ENCODE measurements at regions of chr12 and their contacts with region 1.

Region 1: GRCh38 chr12:96335270-96335669 is 65.0 kb downstream of the CDK17 start:
- DNase-seq: peak in 3 of 14 experiments; percentile 25 to 29 (median 27)
- ATAC-seq: peak; percentile 59
- H3K4me3 ChIP-seq: no peak overlapping the region
- H3K4me3 Mint-ChIP-seq: peak overlapping the region; percentile 68
- H3K27ac ChIP-seq: peak overlapping the region in 1 of 2 donors; percentile 29
- H3K27ac Mint-ChIP-seq: peak overlapping the region; percentile 17
- H3K4me1 ChIP-seq: peaks cover 3% of the 10 kb centered on the region
- H3K4me1 Mint-ChIP-seq: peaks cover 72% of the 10 kb centered on the region
- H3K27me3 ChIP-seq: no peaks in the 10 kb centered on the region
- H3K27me3 Mint-ChIP-seq: no peaks in the 10 kb centered on the region
- CTCF ChIP-seq: no peak

Region 2: GRCh38 chr12:96294831-96295230 is 40.4 kb before region 1 on chr12:
- CTCF ChIA-PET with region 1: interaction called, 3 read pairs
- POLR2A ChIA-PET with region 1: no interaction called
- intact Hi-C with region 1: loop called in 1 of 2 experiments (anchors 5 kb)
- DNase-seq: peak in 3 of 14 experiments; percentile 35 to 51 (median 44)
- ATAC-seq: peak; percentile 51
- H3K4me3 ChIP-seq: no peak overlapping the region
- H3K4me3 Mint-ChIP-seq: peak overlapping the region; percentile 38
- H3K27ac ChIP-seq: no peak overlapping the region
- H3K27ac Mint-ChIP-seq: peak overlapping the region; percentile 55
- H3K4me1 ChIP-seq: peaks cover 5% of the 10 kb centered on the region
- H3K4me1 Mint-ChIP-seq: peaks cover 34% of the 10 kb centered on the region
- H3K27me3 ChIP-seq: no peaks in the 10 kb centered on the region
- H3K27me3 Mint-ChIP-seq: no peaks in the 10 kb centered on the region
- CTCF ChIP-seq: no peak

Region 3: GRCh38 chr12:96321941-96322340 is 13.3 kb before region 1 on chr12:
- CTCF ChIA-PET with region 1: interaction called, 5 read pairs
- POLR2A ChIA-PET with region 1: interaction called, 11 read pairs
- intact Hi-C with region 1: no loop called
- DNase-seq: no peak
- ATAC-seq: no peak
- H3K4me3 ChIP-seq: no peak overlapping the region
- H3K4me3 Mint-ChIP-seq: no peak overlapping the region
- H3K27ac ChIP-seq: no peak overlapping the region
- H3K27ac Mint-ChIP-seq: no peak overlapping the region
- H3K4me1 ChIP-seq: no peaks in the 10 kb centered on the region
- H3K4me1 Mint-ChIP-seq: peaks cover 35% of the 10 kb centered on the region
- H3K27me3 ChIP-seq: no peaks in the 10 kb centered on the region
- H3K27me3 Mint-ChIP-seq: no peaks in the 10 kb centered on the region
- CTCF ChIP-seq: no peak

Region 4: GRCh38 chr12:96548384-96548783 is 213.1 kb after region 1 on chr12:
- CTCF ChIA-PET with region 1: no interaction called
- POLR2A ChIA-PET with region 1: no interaction called
- intact Hi-C with region 1: no loop called
- DNase-seq: no peak
- ATAC-seq: no peak
- H3K4me3 ChIP-seq: no peak overlapping the region
- H3K4me3 Mint-ChIP-seq: no peak overlapping the region
- H3K27ac ChIP-seq: no peak overlapping the region
- H3K27ac Mint-ChIP-seq: no peak overlapping the region
- H3K4me1 ChIP-seq: no peaks in the 10 kb centered on the region
- H3K4me1 Mint-ChIP-seq: no peaks in the 10 kb centered on the region
- H3K27me3 ChIP-seq: no peaks in the 10 kb centered on the region
- H3K27me3 Mint-ChIP-seq: peaks cover 21% of the 10 kb centered on the region
- CTCF ChIP-seq: no peak

Region 5: GRCh38 chr12:96623656-96624217 is 288.5 kb after region 1 on chr12:
- CTCF ChIA-PET with region 1: no interaction called
- POLR2A ChIA-PET with region 1: no interaction called
- intact Hi-C with region 1: no loop called
- DNase-seq: no peak
- ATAC-seq: no peak
- H3K4me3 ChIP-seq: no peak overlapping the region
- H3K4me3 Mint-ChIP-seq: no peak overlapping the region
- H3K27ac ChIP-seq: no peak overlapping the region
- H3K27ac Mint-ChIP-seq: no peak overlapping the region
- H3K4me1 ChIP-seq: no peaks in the 10 kb centered on the region
- H3K4me1 Mint-ChIP-seq: no peaks in the 10 kb centered on the region
- H3K27me3 ChIP-seq: no peaks in the 10 kb centered on the region
- H3K27me3 Mint-ChIP-seq: no peaks in the 10 kb centered on the region
- CTCF ChIP-seq: no peak

Region 6: GRCh38 chr12:97368455-97369163 is 1033.3 kb after region 1 on chr12:
- CTCF ChIA-PET with region 1: no interaction called
- POLR2A ChIA-PET with region 1: no interaction called
- intact Hi-C with region 1: no loop called
- DNase-seq: no peak
- ATAC-seq: no peak
- H3K4me3 ChIP-seq: no peak overlapping the region
- H3K4me3 Mint-ChIP-seq: no peak overlapping the region
- H3K27ac ChIP-seq: no peak overlapping the region
- H3K27ac Mint-ChIP-seq: no peak overlapping the region
- H3K4me1 ChIP-seq: no peaks in the 10 kb centered on the region
- H3K4me1 Mint-ChIP-seq: no peaks in the 10 kb centered on the region
- H3K27me3 ChIP-seq: peaks cover 0 to 3% of the 10 kb centered on the region in 2 experiments
- H3K27me3 Mint-ChIP-seq: peaks cover 23% of the 10 kb centered on the region
- CTCF ChIP-seq: no peak